Activated naive CD4-positive, alpha-beta T cell treated with anti-CD3 and anti-CD28 coated beads for 36 hours (primary cell): ENCODE measurements at regions of chr2 and their contacts with region 1.

Region 1: GRCh38 chr2:105744091-105744908 is 412 bp upstream of the NCK2 start:
- DNase-seq: peak; percentile 63
- H3K4me3 Mint-ChIP-seq: peak overlapping the region; percentile 67
- H3K27ac Mint-ChIP-seq: peak overlapping the region; percentile 87
- H3K4me1 Mint-ChIP-seq: peaks cover 70% of the 10 kb centered on the region
- H3K27me3 Mint-ChIP-seq: no peaks in the 10 kb centered on the region

Region 2: GRCh38 chr2:105337124-105338019 is 406.9 kb before region 1 on chr2 and contains the start of gene C2orf49:
- CTCF ChIA-PET with region 1: no interaction called
- intact Hi-C with region 1: loop called (anchors 10 kb)
- DNase-seq: peak; percentile 92
- H3K4me3 Mint-ChIP-seq: peak within 1 kb of the TSS; percentile 99
- H3K27ac Mint-ChIP-seq: peak within 1 kb of the TSS; percentile 100
- H3K4me1 Mint-ChIP-seq: peaks cover 31% of the 10 kb centered on the region
- H3K27me3 Mint-ChIP-seq: no peaks in the 10 kb centered on the region
- total RNA-seq, gene C2orf49: 15.6 to 16.4 TPM

Region 3: DNA sequence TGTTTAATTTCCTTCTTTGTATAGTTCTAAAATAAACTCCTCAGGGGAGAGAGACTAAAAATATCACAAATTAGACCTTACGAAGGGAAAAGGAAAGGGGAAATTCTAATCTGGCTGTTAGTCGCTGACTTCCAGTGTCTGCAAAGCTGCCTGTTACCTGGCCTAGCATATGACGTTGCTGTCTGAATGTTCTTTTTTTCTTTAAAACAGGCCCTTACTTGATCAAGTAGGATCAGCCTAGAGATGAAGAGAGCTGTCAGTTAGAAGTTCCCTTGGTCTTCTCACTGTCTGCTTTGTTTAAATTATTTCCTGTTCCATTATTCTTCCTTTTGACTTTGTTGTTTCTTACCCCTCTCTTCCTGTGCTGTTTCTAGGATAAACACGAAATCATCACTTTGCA is 11.6 kb after region 1 on chr2:
- CTCF ChIA-PET with region 1: interaction called, 17 read pairs
- intact Hi-C with region 1: loop called (anchors 1 kb)
- DNase-seq: peak; percentile 36
- H3K4me3 Mint-ChIP-seq: peak overlapping the region; percentile 34
- H3K27ac Mint-ChIP-seq: peak overlapping the region; percentile 98
- H3K4me1 Mint-ChIP-seq: peaks cover 97% of the 10 kb centered on the region
- H3K27me3 Mint-ChIP-seq: no peaks in the 10 kb centered on the region

Region 4: GRCh38 chr2:105822186-105822585 is 77.9 kb after region 1 on chr2:
- CTCF ChIA-PET with region 1: no interaction called
- intact Hi-C with region 1: no loop called
- DNase-seq: peak; percentile 55
- H3K4me3 Mint-ChIP-seq: no peak overlapping the region
- H3K27ac Mint-ChIP-seq: peak overlapping the region; percentile 74
- H3K4me1 Mint-ChIP-seq: peaks cover 77% of the 10 kb centered on the region
- H3K27me3 Mint-ChIP-seq: no peaks in the 10 kb centered on the region

Region 5: GRCh38 chr2:105836840-105837692 is 92.8 kb after region 1 on chr2:
- CTCF ChIA-PET with region 1: interaction called, 3 read pairs
- intact Hi-C with region 1: loop called (anchors 1 kb)
- DNase-seq: peak; percentile 71
- H3K4me3 Mint-ChIP-seq: no peak overlapping the region
- H3K27ac Mint-ChIP-seq: peak overlapping the region; percentile 84
- H3K4me1 Mint-ChIP-seq: peaks cover 80% of the 10 kb centered on the region
- H3K27me3 Mint-ChIP-seq: no peaks in the 10 kb centered on the region

Region 6: DNA sequence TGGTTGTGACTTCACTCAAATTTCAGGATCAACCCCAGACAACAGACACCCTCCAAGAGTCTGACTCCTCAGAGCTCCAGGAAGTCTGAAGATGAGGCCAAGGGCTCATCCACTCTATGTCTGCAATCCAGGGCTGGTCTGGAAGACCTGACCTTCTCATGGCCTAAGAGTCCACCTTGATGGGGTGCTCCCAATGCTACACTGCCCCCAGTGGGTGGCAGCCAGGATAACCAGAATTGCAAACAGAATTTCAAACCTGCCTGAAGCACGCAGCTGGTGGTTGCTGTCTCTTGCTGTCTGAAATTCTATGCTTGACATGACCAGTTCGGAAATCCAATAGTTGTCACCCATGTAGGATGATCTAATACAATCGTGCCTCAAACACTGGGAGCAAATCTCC is 353.8 kb after region 1 on chr2:
- CTCF ChIA-PET with region 1: interaction called, 5 read pairs
- intact Hi-C with region 1: loop called (anchors 1 kb)
- DNase-seq: peak; percentile 53
- H3K4me3 Mint-ChIP-seq: no peak overlapping the region
- H3K27ac Mint-ChIP-seq: no peak overlapping the region
- H3K4me1 Mint-ChIP-seq: peaks cover 40% of the 10 kb centered on the region
- H3K27me3 Mint-ChIP-seq: no peaks in the 10 kb centered on the region

Region 7: GRCh38 chr2:106566050-106566449 is 821.8 kb after region 1 on chr2:
- CTCF ChIA-PET with region 1: no interaction called
- intact Hi-C with region 1: loop called (anchors 1 kb)
- DNase-seq: peak; percentile 85
- H3K4me3 Mint-ChIP-seq: peak overlapping the region; percentile 8
- H3K27ac Mint-ChIP-seq: peak overlapping the region; percentile 82
- H3K4me1 Mint-ChIP-seq: peaks cover 42% of the 10 kb centered on the region
- H3K27me3 Mint-ChIP-seq: no peaks in the 10 kb centered on the region